ENCODE measurements at regions of chr11 and their contacts with region 1.

Region 1: GRCh38 chr11:33162831-33163230 is 1.6 kb upstream of the CSTF3 start:
- H3K4me3 ChIP-seq: no peak overlapping the region
- H3K27ac ChIP-seq: no peak overlapping the region
- H3K4me1 ChIP-seq: no peaks in the 10 kb centered on the region
- CTCF ChIP-seq: no peak

Region 2: GRCh38 chr11:33329705-33330329 is 167.0 kb after region 1 on chr11:
- CTCF ChIA-PET with region 1: interaction called, 61 read pairs
- POLR2A ChIA-PET with region 1: no interaction called
- H3K4me3 ChIP-seq: no peak overlapping the region
- H3K27ac ChIP-seq: no peak overlapping the region
- H3K4me1 ChIP-seq: no peaks in the 10 kb centered on the region
- CTCF ChIP-seq: no peak